Right ventricle myocardium superior (tissue), 1 donor: ENCODE measurements at regions of chr17 and their contacts with region 1.

Region 1: DNA sequence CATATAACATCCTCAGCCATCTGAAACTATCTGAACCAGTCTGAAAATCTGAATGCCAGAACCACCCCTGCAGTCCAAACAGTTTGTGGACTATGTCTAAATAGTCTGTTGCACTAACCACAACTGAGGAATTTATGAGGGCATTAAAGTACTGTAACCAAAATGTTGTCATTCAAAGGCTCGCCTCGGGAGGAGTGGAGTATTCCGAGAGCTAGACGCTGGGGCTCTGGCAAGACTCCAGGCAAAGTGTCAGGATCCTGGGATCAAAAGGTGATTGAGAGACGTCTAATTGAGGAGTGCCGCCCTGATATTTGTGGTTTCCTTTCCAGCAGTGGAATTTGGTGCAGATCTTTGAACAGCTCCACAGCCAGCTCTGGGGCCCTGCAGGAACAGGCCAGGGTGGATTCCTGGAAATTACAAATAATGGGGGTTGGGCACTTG is 142.9 kb upstream of the MYOCD start:
- DNase-seq: no peak
- ATAC-seq: no peak

Region 2: DNA sequence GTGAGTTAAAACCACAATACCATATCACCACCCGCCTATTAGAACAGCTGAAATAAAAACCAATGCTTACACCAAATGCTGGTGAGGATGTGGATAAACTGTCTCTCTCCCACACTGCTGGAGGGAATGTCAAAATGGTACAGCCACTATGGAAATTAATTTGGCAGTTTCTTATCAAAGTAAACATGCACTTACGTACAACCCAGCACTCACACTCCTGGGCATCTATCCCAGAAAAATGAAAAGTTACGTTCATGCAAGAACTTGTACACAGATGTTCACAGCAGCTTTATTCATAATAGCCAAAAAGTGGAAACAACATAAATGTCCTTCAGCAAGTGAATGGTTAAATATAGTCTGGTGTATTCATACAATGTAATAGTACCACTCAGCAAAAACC is 30.3 kb before region 1 on chr17:
- intact Hi-C with region 1: no loop called
- DNase-seq: no peak
- ATAC-seq: no peak

Region 3: DNA sequence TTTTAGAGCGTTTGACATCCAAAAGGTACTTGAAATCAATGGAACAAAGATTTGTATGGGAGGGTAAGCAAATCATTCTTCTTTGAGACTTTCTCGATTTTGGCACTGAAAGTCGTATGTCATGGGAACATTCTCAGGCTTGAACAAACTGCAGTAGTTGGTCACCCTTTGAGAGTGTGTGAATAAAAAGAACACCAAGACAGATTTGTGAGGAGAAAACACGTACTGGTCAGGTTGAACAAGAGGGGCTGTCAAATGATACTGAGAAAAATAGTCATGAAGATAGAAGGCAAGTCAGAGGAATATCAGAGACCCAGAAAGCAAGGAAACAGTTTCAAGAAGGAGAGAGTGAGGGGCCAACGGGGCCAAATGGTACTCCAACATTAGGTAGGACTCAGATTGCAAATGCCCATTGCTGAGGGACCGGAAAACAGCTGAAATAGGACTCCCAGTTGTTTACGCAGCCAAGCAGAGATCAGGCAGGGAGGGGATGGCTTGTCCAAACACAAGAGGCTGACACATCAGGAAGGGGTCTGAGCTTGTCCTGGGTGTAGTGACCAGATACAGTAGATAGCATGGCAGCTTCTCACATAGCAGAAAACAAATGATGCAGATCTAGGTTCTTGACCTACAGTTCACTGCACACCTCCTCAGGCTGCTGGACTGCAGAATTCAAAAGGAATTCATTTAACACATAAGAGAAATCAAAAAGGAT is 68.4 kb after region 1 on chr17:
- intact Hi-C with region 1: loop called (anchors 10 kb)
- DNase-seq: no peak
- ATAC-seq: no peak